ENCODE measurements at regions of chr11 and their contacts with region 1.

Region 1: DNA sequence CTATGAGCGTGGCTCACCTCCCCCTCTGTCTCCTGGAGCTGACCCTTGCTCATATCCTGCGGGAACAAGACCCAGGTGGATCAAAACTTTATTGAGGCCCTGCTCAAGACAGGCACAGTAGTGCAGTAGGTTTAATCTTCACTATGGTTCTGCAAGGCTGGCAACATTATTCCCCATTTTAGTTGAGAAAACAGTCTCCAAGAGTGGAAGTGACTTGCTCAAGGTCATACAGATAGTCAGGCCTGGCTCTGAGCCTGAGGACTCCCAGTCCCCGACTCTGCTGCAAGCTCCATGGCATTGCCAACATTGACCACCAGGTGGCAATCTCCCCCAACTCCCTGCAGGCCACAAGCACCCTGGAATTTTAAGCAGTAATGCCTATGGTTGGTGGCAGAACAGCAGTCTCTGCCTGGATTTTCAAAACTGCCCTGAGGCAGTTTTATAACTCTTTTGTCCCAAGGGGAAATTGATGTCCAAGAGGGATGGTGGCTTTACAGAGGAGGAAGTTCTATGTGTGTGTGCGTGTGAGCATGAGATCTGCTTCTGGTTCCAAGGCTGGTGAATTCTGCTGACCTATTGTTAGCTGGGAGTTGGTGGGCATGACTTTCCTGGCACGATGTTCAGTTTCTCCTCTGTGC is 34.1 kb downstream of the NEU3 start:
- DNase-seq: peak; percentile 59 to 84 (median 70)
- ATAC-seq: peak; percentile 86
- H3K4me3 ChIP-seq: no peak overlapping the region
- H3K4me3 Mint-ChIP-seq: no peak overlapping the region
- H3K27ac ChIP-seq: no peak overlapping the region
- H3K27ac Mint-ChIP-seq: no peak overlapping the region
- H3K4me1 ChIP-seq: no peaks in the 10 kb centered on the region
- H3K4me1 Mint-ChIP-seq: no peaks in the 10 kb centered on the region
- H3K27me3 ChIP-seq: no peaks in the 10 kb centered on the region
- H3K27me3 Mint-ChIP-seq: no peaks in the 10 kb centered on the region
- CTCF ChIP-seq: peak; percentile 96

Region 2: DNA sequence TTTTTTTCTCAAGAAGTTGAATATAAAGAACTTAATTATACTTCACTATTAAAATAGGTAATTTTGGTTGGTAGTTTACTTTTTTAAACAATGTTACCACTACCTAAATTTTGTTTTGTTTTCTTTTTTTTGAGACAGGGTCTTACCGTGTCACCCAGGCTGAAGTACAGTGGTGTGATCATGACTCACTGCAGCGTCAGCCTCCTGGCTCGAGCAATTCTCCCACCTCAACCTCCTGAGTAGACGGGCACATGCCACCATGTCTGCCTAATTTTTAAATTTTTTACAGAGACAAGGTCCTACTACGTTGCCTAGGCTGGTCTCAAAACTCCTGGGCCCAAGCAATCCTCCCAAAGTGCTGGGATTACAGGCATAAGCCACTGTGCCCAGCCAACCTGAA is 56.2 kb before region 1 on chr11:
- CTCF ChIA-PET with region 1: no interaction called
- POLR2A ChIA-PET with region 1: no interaction called
- intact Hi-C with region 1: no loop called
- DNase-seq: no peak
- ATAC-seq: no peak
- H3K4me3 ChIP-seq: no peak overlapping the region
- H3K4me3 Mint-ChIP-seq: no peak overlapping the region
- H3K27ac ChIP-seq: no peak overlapping the region
- H3K27ac Mint-ChIP-seq: no peak overlapping the region
- H3K4me1 ChIP-seq: no peaks in the 10 kb centered on the region
- H3K4me1 Mint-ChIP-seq: peaks cover 34% of the 10 kb centered on the region
- H3K27me3 ChIP-seq: no peaks in the 10 kb centered on the region
- H3K27me3 Mint-ChIP-seq: no peaks in the 10 kb centered on the region
- CTCF ChIP-seq: no peak

Region 3: GRCh38 chr11:74980634-74981033 is 42.2 kb before region 1 on chr11:
- CTCF ChIA-PET with region 1: no interaction called
- POLR2A ChIA-PET with region 1: no interaction called
- intact Hi-C with region 1: no loop called
- DNase-seq: peak in 2 of 14 experiments; percentile 13 to 17
- ATAC-seq: no peak
- H3K4me3 ChIP-seq: no peak overlapping the region
- H3K4me3 Mint-ChIP-seq: no peak overlapping the region
- H3K27ac ChIP-seq: no peak overlapping the region
- H3K27ac Mint-ChIP-seq: no peak overlapping the region
- H3K4me1 ChIP-seq: no peaks in the 10 kb centered on the region
- H3K4me1 Mint-ChIP-seq: no peaks in the 10 kb centered on the region
- H3K27me3 ChIP-seq: no peaks in the 10 kb centered on the region
- H3K27me3 Mint-ChIP-seq: no peaks in the 10 kb centered on the region
- CTCF ChIP-seq: no peak

Region 4: DNA sequence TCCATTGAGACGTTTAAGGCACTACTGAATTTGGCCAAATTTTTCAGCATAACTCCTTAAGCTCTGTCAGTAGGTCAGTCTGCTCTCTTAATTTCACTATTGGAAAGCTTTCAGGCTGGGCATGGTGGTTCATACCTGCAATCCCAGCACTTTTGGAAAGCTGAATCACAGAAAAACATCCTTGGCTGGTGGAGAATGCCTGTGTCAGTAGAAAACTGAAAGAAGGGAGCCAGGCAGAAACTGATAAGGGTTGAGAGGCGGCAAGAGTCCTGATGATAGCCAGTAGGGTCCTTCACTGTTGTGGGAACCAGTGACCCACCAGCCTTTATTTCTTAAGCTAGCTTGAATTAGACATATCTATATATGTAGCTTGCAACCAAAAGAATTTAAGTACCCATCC is 11.5 kb before region 1 on chr11:
- CTCF ChIA-PET with region 1: interaction called, 10 read pairs
- POLR2A ChIA-PET with region 1: no interaction called
- intact Hi-C with region 1: no loop called
- DNase-seq: no peak
- ATAC-seq: no peak
- H3K4me3 ChIP-seq: no peak overlapping the region
- H3K4me3 Mint-ChIP-seq: no peak overlapping the region
- H3K27ac ChIP-seq: no peak overlapping the region
- H3K27ac Mint-ChIP-seq: no peak overlapping the region
- H3K4me1 ChIP-seq: no peaks in the 10 kb centered on the region
- H3K4me1 Mint-ChIP-seq: no peaks in the 10 kb centered on the region
- H3K27me3 ChIP-seq: no peaks in the 10 kb centered on the region
- H3K27me3 Mint-ChIP-seq: no peaks in the 10 kb centered on the region
- CTCF ChIP-seq: no peak

Region 5: GRCh38 chr11:75204685-75205563 is 182.0 kb after region 1 on chr11:
- CTCF ChIA-PET with region 1: interaction called, 6 read pairs
- POLR2A ChIA-PET with region 1: no interaction called
- intact Hi-C with region 1: loop called (anchors 1 to 2 kb)
- DNase-seq: peak; percentile 66 to 90 (median 78)
- ATAC-seq: peak; percentile 74
- H3K4me3 ChIP-seq: no peak overlapping the region
- H3K4me3 Mint-ChIP-seq: no peak overlapping the region
- H3K27ac ChIP-seq: no peak overlapping the region
- H3K27ac Mint-ChIP-seq: no peak overlapping the region
- H3K4me1 ChIP-seq: no peaks in the 10 kb centered on the region
- H3K4me1 Mint-ChIP-seq: no peaks in the 10 kb centered on the region
- H3K27me3 ChIP-seq: peaks cover 2 to 9% of the 10 kb centered on the region in 2 experiments
- H3K27me3 Mint-ChIP-seq: peaks cover 3% of the 10 kb centered on the region
- CTCF ChIP-seq: peak; percentile 87

Region 6: DNA sequence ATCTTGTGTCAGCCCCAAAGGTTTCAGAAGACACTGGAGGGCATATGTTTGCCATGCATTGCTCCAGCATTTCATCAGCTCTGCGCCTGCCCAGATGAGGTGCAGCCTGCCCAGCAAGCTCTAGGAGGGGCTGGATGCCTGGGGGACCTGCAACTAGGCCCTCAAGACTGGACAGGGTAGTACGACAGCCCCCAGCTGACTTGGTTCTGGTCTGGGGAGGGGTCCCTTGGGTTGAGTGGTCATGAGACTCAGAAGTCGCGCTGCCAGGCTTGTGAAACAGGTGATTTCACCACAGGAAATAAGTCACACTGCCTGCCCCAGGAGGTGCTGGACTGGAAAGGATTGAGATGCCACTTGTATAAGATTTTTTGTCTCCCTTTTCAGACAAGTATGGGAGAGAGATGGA is 241.1 kb after region 1 on chr11:
- CTCF ChIA-PET with region 1: no interaction called
- POLR2A ChIA-PET with region 1: no interaction called
- intact Hi-C with region 1: loop called in 1 of 2 experiments (anchors 5 kb)
- DNase-seq: peak in 4 of 14 experiments; percentile 29 to 46 (median 41)
- ATAC-seq: peak; percentile 21
- H3K4me3 ChIP-seq: no peak overlapping the region
- H3K4me3 Mint-ChIP-seq: no peak overlapping the region
- H3K27ac ChIP-seq: peak overlapping the region in 1 of 2 donors; percentile 22
- H3K27ac Mint-ChIP-seq: peak overlapping the region; percentile 67
- H3K4me1 ChIP-seq: peaks cover 56% of the 10 kb centered on the region
- H3K4me1 Mint-ChIP-seq: peaks cover 48% of the 10 kb centered on the region
- H3K27me3 ChIP-seq: no peaks in the 10 kb centered on the region
- H3K27me3 Mint-ChIP-seq: no peaks in the 10 kb centered on the region
- CTCF ChIP-seq: no peak